Vagina (tissue), 2 donors: ENCODE measurements at regions of chr16 and their contacts with region 1.

Region 1: DNA sequence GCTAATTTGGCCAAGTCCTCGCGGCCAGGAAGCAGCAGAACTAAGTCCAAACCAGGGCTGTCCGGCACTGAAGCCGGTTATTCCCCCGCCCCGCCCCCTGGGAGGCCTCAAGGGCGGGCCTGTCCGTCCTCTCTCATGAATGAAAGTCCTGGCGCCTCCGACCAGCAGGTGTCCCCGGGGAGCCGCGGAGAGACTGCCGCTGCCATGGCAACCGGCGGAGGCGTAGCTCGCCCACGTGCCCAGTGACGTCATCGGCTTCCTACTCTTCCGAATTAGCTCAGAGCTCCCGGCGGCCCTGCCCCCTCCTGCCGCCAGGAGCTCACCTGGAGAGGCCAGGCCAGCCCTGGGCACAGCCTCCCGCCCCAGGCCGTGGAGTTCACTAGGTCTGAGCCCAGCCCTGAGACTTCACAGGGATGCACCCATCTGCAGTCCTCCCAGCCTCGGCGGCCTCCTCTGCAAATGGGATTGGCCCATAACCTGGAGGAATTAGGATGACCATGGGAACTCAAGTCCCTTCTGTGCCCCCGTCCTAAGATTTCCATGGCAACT is 1.3 kb downstream of the SPATA2L start:
- DNase-seq: peak in 1 of 2 donors; percentile 99
- H3K4me3 ChIP-seq: peak overlapping the region; percentile 68 to 84
- H3K27ac ChIP-seq: peak overlapping the region; percentile 79
- H3K4me1 ChIP-seq: peaks cover 28% of the 10 kb centered on the region
- H3K27me3 ChIP-seq: no peaks in the 10 kb centered on the region
- CTCF ChIP-seq: peak; percentile 36 to 71 (median 52)
- POLR2A ChIP-seq: peak in 1 of 2 donors; percentile 24

Region 2: DNA sequence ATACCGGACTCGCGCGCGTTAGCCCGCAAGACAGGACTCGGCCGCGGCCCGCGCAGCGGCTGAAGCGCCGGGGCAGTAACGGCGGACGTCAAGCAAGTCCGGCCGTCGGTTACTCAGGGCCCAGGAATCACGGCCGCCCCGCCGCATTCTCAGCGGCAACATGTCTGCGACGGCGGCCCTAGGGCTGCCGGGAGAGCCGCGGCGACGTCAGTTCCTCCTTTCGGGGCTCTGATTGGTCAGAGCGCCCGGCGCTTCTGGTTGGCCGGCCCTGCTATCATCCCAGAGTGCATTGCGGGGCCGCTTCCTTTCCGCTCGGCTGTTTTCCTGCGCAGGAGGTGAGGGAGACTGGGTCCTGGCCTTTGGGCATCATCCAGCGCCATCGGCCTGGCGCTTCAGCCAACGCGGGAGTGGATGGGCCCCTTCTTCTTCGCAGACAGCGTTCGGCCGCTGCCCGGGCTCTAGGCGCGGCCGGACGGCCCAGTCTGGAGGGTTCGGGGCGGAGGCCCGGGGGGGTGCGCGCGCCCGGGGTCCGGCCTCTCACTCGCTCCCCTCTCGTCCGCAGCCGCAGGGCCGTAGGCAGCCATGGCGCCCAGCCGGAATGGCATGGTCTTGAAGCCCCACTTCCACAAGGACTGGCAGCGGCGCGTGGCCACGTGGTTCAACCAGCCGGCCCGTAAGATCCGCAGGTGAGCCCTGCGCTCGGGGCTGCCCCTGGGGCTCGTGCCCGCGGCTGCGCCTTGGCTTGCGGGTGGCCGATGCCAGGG is 139.6 kb before region 1 on chr16 and contains the start of gene RPL13:
- intact Hi-C with region 1: loop called (anchors 5 kb)
- DNase-seq: peak in 1 of 2 donors; percentile 96
- H3K4me3 ChIP-seq: peak within 1 kb of the TSS; percentile 82 to 88
- H3K27ac ChIP-seq: peak within 1 kb of the TSS; percentile 84
- H3K4me1 ChIP-seq: peaks cover 54% of the 10 kb centered on the region
- H3K27me3 ChIP-seq: no peaks in the 10 kb centered on the region
- CTCF ChIP-seq: no peak
- POLR2A ChIP-seq: peak; percentile 59 to 95
- total RNA-seq, gene RPL13: 8,204 TPM

Region 3: DNA sequence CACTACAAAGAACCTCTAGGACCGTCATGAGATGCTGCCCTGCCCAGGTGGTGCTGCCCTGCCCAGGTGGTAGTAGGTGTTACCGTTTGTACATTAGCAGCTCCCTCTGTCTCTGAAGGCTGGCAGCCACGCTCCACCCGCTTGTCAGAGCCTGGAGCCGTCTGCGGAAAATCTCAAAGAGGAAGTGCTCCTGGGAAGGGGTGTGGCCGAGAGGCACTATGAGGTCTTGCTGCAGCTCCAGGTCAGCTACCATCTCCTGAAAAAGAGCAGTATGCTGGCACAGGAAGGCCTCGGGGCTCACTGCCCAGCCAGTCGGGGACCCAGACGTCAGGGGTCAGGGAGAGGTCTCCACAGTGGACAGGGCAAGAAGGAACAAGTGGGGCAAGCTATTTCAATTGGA is 49.5 kb after region 1 on chr16:
- intact Hi-C with region 1: no loop called
- DNase-seq: no peak
- H3K4me3 ChIP-seq: no peak overlapping the region
- H3K27ac ChIP-seq: no peak overlapping the region
- H3K4me1 ChIP-seq: no peaks in the 10 kb centered on the region
- H3K27me3 ChIP-seq: no peaks in the 10 kb centered on the region
- CTCF ChIP-seq: no peak
- POLR2A ChIP-seq: no peak

Region 4: DNA sequence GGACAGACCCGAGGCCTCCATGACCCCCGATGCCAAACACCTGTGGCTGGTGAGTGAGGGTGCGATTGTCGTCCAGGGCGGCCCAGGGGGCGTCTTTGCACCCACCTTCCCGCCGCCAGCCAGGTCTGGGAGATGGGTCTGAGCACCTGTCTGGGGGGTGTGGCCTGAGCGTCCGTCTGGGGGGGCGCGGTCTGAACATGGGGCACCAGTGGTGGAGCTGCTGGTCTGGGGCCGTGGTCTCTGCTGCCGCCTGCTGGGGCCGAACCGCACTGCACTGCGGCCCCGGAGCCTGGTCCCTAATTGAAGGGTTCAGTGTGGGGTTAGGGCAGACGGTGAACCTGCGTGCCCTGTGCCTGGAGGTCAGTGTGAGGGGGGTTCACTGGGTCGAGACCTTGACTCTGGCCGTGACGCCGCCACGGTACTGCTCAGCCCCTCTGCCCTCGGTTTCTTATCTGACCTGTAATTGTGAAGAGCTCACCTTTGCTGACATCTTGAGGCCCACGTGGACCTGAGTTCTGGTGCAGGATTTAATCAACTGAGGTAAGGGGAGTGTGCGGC is 160.7 kb after region 1 on chr16:
- intact Hi-C with region 1: loop called (anchors 10 kb)
- DNase-seq: no peak
- H3K4me3 ChIP-seq: no peak overlapping the region
- H3K27ac ChIP-seq: no peak overlapping the region
- H3K4me1 ChIP-seq: peaks cover 6% of the 10 kb centered on the region
- H3K27me3 ChIP-seq: no peaks in the 10 kb centered on the region
- CTCF ChIP-seq: peak; percentile 84 to 91 (median 86)
- POLR2A ChIP-seq: no peak